ENCODE measurements at regions of chr6 and their contacts with region 1.

Region 1: DNA sequence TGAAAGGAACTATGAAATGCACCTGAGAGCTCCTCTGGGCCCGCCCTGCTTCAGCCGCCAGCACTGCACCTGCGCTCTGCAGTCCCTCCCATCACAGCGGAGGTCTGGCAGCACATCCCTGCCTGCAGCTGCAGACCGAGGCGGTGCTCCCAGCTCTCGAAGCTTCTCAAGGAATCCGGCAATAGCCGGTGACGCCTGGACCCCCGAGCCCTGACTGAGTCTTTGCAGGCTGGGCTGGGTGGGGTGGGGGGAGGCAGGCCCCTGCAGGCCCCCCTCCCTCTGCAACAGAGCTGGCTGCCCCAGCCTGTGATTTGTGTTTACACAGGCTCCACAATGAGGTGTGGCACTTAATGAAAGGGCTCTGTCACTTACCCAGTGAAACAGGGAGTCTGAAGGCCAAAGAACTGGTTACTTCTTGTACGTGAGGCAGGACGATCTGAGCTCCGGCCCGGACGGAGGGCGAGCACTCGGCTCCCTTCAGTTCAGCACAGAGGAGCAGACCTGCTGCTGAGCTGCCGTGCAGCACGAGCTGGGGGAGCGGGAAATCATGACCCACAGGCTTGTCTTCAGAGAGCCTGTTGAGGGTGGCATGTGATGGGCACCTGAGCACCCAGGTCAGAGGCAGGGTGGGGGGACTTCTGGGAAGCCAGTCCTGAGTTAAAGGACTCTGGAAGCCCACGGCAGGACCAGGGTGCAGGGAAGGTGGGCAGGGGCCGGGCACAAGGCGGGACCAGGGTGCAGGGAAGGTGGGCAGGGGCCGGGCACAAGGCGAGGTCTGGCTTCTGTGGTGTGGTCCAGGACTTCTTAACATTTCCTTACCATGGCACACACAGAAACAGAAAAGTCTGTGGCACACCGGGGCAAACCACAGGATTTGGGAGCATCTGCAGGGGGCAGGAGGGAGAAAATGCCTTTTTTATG is 192.3 kb upstream of the THBS2 start:
- DNase-seq: peak in 1 of 3 donors; percentile 51
- ATAC-seq: no peak
- H3K4me3 ChIP-seq: no peak overlapping the region
- H3K27ac ChIP-seq: no peak overlapping the region
- H3K4me1 ChIP-seq: no peaks in the 10 kb centered on the region
- H3K27me3 ChIP-seq: no peaks in the 10 kb centered on the region

Region 2: DNA sequence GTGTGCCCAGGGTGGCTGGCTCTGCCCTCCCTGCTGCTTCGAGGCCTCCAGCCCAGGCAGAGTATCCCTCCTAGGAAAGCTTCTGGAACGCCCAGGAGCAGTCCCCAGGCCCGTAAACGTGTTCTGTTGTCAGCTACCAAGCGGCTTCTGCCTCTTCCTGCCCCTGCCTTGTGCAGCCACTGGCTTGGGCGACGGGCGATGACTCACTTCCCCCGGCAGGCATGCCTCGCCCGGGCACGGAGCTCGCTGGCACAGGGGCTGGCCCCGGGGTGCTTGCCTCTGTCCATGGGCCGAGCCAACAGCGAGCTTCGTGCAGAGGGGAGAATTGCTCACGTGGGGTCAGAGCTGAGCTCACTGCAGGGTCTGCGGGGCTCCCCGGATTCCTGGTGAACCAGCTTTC is 105.5 kb before region 1 on chr6:
- intact Hi-C with region 1: loop called in 1 of 4 experiments (anchors 10 kb)
- DNase-seq: no peak
- ATAC-seq: peak in 1 of 2 donors; percentile 41
- H3K4me3 ChIP-seq: no peak overlapping the region
- H3K27ac ChIP-seq: no peak overlapping the region
- H3K4me1 ChIP-seq: no peaks in the 10 kb centered on the region
- H3K27me3 ChIP-seq: no peaks in the 10 kb centered on the region

Region 3: DNA sequence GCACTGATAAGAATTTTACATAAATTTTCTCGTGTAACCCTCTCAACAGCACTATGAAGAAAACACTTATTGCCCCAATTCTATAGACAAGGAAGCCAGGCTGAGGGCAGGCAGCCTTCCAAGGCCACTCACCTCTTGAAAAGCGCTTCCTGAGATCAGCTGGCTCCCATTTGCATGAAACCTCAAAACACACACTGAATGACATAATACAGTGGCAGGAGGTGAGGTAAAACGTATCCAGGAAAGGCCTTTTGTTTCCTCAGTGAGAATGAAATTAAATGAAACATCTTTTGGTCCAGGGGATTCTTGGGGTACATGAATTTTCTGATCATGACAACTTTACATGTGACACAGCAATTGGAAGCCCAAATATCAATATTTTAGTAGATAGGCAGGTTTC is 143.4 kb after region 1 on chr6:
- intact Hi-C with region 1: no loop called
- DNase-seq: peak in 1 of 3 donors; percentile 58
- ATAC-seq: peak in 1 of 2 donors; percentile 31
- H3K4me3 ChIP-seq: no peak overlapping the region
- H3K27ac ChIP-seq: no peak overlapping the region
- H3K4me1 ChIP-seq: no peaks in the 10 kb centered on the region
- H3K27me3 ChIP-seq: no peaks in the 10 kb centered on the region

Measured in right cardiac atrium (tissue), 5 donors.